HepG2 (cell line): ENCODE measurements at regions of chr3 and their contacts with region 1.

Region 1: DNA sequence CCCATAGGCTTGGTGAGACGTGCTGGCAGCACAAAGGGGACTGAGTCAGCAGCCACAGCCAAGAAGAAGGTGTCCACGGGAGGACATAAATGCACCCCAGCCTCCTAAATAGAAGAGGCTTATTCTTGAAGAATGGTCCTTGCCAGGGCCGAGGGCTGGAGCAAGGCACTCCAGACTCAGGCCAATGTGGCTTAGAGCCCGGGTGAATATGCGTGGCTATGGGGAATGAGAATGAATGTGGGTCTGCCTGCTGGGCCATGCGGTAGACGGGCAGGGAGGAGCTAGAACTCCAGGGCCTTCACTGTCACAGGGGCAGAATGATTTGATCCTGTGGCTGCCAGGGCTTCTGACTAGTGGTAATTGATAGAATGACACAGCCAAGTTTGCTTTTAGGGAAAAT is 34.0 kb downstream of the DHX30 start:
- DNase-seq: no peak
- ATAC-seq: peak; percentile 23; the same call in 2 of the 3 replicates
- H3K4me3 ChIP-seq: no peak overlapping the region
- H3K27ac ChIP-seq: no peak overlapping the region
- H3K4me1 ChIP-seq: no peaks in the 10 kb centered on the region
- H3K27me3 ChIP-seq: no peaks in the 10 kb centered on the region
- CTCF ChIP-seq: no peak
- EP300 ChIP-seq: no peak
- POLR2A ChIP-seq: no peak
- RAD21 ChIP-seq: no peak

Region 2: DNA sequence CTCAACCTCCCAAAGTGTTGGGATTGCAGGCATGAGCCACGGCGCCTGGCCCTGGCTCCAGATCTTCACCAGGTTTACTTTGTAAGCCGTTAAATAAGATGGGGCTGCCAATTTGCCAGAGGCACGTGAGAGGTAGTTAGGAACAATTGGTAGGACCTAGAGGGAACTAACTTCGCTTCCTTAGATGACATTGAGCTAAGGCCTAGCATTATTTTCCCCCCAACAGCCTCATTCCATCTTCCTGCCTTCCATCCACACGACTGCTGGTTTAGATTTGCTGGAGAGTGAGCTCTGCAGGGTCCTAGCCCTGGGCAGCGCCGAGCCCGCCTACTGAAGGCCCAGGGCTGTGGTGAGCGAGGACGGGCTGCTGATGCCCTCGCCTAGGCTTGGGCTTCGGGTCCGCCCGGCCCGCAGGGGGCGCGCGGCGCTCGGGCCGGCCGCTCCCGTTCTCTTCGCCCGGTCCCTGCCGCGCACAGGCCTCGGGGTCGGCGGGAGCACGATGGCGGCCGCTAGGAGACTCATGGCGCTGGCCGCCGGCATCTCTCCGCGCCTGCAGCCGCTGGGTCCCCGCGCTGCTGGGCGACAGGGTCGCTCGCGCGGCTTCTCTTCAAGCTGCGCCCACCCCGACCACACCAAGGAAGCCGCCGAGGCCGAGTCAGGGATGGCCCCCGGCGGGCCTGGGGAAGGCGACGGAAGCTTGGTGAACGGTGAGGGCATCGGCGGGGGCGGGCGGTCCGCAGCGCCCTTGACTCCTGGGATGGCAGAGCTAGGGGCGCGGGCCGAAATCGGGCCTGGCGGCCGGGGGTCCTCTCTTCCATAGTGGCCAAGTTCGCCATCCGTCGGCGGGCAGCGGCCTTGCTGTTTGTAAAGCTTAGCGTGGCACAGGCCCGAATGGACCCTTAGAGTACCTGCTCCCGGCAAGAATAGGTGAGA is 12.2 kb before region 1 on chr3:
- CTCF ChIA-PET with region 1: no interaction called
- POLR2A ChIA-PET with region 1: interaction called, 12 read pairs
- in situ Hi-C with region 1: no loop called
- intact Hi-C with region 1: no loop called
- DNase-seq: peak; percentile 69
- ATAC-seq: peak; percentile 99
- H3K4me3 ChIP-seq: peak overlapping the region; percentile 88 to 98 (median 91)
- H3K27ac ChIP-seq: peak overlapping the region; percentile 73
- H3K4me1 ChIP-seq: peaks cover 22% of the 10 kb centered on the region
- H3K27me3 ChIP-seq: no peaks in the 10 kb centered on the region; a peak in 1 of 5 replicates
- CTCF ChIP-seq: peak; percentile 85
- EP300 ChIP-seq: 0 out of 4 replicates have a peak, but pooled peaks have one; percentile 4 to 30
- POLR2A ChIP-seq: peak; percentile 73 to 81
- RAD21 ChIP-seq: peak; percentile 85

Region 3: GRCh38 chr3:47989981-47990440 is 153.0 kb after region 1 on chr3:
- CTCF ChIA-PET with region 1: interaction called, 13 read pairs
- POLR2A ChIA-PET with region 1: interaction called, 4 read pairs
- in situ Hi-C with region 1: no loop called
- intact Hi-C with region 1: loop called (anchors 1 kb)
- DNase-seq: peak; percentile 76
- ATAC-seq: peak; percentile 93
- H3K4me3 ChIP-seq: no peak overlapping the region
- H3K27ac ChIP-seq: no peak overlapping the region
- H3K4me1 ChIP-seq: no peaks in the 10 kb centered on the region
- H3K27me3 ChIP-seq: no peaks in the 10 kb centered on the region
- CTCF ChIP-seq: peak; percentile 91
- EP300 ChIP-seq: no peak
- POLR2A ChIP-seq: no peak
- RAD21 ChIP-seq: peak; percentile 90

Region 4: DNA sequence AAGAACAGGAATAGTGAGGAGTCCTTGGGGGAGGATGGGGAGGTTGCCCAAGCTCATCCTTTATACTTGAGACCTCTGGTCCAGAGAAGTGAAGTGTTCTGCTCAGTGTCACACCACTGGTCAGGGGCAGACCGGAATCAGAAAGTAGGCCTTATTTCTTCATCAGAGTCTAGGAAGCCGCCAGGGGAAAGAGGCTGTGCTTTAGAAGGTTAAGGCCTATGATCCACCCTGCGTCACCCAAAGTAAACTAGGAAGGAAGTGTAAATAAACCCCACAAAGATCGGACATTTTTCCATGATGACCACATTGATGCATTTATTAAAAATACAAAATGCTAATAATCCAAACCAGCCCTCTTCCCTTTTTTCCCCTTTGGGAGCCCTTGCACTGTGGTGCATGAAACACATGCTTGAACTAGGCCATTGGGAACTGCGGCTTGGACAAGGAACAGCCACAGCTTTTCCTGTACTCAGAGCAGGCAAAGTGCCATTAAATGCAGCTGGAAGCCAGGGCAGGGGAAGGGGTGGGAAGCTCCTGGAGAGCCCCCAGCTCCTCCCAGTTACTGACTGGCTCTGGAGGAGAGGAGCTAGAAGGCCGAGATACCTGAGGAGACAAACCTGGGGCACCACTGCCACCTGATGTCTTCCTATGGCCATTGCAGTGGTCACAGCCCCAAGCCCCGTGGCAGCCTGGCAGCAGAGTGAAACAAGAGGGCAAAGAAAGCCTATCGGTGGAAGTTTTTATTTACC is 314.2 kb after region 1 on chr3:
- CTCF ChIA-PET with region 1: interaction called, 11 read pairs
- POLR2A ChIA-PET with region 1: interaction called, 9 read pairs
- in situ Hi-C with region 1: loop called (anchors 10 kb)
- intact Hi-C with region 1: loop called (anchors 2 kb)
- DNase-seq: peak; percentile 78
- ATAC-seq: peak; percentile 97
- H3K4me3 ChIP-seq: peak overlapping the region in 2 of 3 experiments; percentile 41 to 59; a peak in 5 of 6 replicates
- H3K27ac ChIP-seq: no peak overlapping the region
- H3K4me1 ChIP-seq: peaks cover 22% of the 10 kb centered on the region
- H3K27me3 ChIP-seq: no peaks in the 10 kb centered on the region
- CTCF ChIP-seq: peak; percentile 98
- EP300 ChIP-seq: no peak
- POLR2A ChIP-seq: no peak
- RAD21 ChIP-seq: peak; percentile 96

Region 5: DNA sequence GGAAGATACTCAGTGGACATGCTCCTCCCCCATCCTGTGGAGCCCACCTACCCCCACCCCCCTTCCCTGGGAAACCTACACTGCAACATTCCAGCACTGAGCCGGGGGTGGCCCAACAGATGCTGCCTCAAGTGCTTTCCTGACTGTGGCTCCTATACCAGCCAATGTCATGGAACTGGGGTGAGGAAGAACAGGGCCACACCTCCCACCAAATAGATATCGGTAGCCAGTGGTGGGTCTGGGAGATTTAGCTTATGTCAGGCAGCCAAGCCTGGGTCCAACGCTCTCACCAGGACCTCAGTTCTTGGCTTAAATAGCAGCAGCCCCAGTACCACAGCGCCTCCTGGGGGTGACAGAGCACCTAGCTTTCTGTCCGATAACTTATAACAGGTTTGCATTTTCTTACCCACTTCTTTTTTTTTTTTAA is 321.0 kb after region 1 on chr3:
- CTCF ChIA-PET with region 1: no interaction called
- POLR2A ChIA-PET with region 1: no interaction called
- in situ Hi-C with region 1: loop called (anchors 10 kb)
- intact Hi-C with region 1: loop called (anchors 2 kb)
- DNase-seq: peak; percentile 47
- ATAC-seq: peak; percentile 64
- H3K4me3 ChIP-seq: no peak overlapping the region
- H3K27ac ChIP-seq: no peak overlapping the region
- H3K4me1 ChIP-seq: no peaks in the 10 kb centered on the region
- H3K27me3 ChIP-seq: no peaks in the 10 kb centered on the region
- CTCF ChIP-seq: peak; percentile 69
- EP300 ChIP-seq: no peak
- POLR2A ChIP-seq: no peak
- RAD21 ChIP-seq: peak; percentile 22; the same call in 1 of the 2 replicates